ENCODE measurements at regions of chr2 and their contacts with region 1.

Region 1: GRCh38 chr2:230712443-230713330 is at the start of gene CAB39:
- DNase-seq: peak; percentile 90
- H3K4me3 Mint-ChIP-seq: peak within 1 kb of the TSS; percentile 99
- H3K27ac Mint-ChIP-seq: peak within 1 kb of the TSS; percentile 97
- H3K4me1 Mint-ChIP-seq: peaks cover 42% of the 10 kb centered on the region
- H3K27me3 Mint-ChIP-seq: no peaks in the 10 kb centered on the region
- total RNA-seq, gene CAB39: 156 to 161 TPM

Region 2: GRCh38 chr2:230643576-230644291 is 69.0 kb before region 1 on chr2:
- CTCF ChIA-PET with region 1: interaction called, 5 read pairs
- POLR2A ChIA-PET with region 1: interaction called, 33 read pairs
- DNase-seq: peak; percentile 51
- H3K4me3 Mint-ChIP-seq: peak overlapping the region; percentile 34
- H3K27ac Mint-ChIP-seq: peak overlapping the region; percentile 90
- H3K4me1 Mint-ChIP-seq: peaks cover 38% of the 10 kb centered on the region
- H3K27me3 Mint-ChIP-seq: no peaks in the 10 kb centered on the region

Region 3: GRCh38 chr2:230668184-230668938 is 44.3 kb before region 1 on chr2:
- CTCF ChIA-PET with region 1: interaction called, 5 read pairs
- POLR2A ChIA-PET with region 1: interaction called, 15 read pairs
- DNase-seq: peak; percentile 44
- H3K4me3 Mint-ChIP-seq: no peak overlapping the region
- H3K27ac Mint-ChIP-seq: peak overlapping the region; percentile 89
- H3K4me1 Mint-ChIP-seq: peaks cover 84% of the 10 kb centered on the region
- H3K27me3 Mint-ChIP-seq: no peaks in the 10 kb centered on the region

Region 4: GRCh38 chr2:230781130-230781797 is 68.6 kb after region 1 on chr2:
- CTCF ChIA-PET with region 1: interaction called, 8 read pairs
- POLR2A ChIA-PET with region 1: interaction called, 11 read pairs
- DNase-seq: peak; percentile 77
- H3K4me3 Mint-ChIP-seq: peak overlapping the region; percentile 17
- H3K27ac Mint-ChIP-seq: peak overlapping the region; percentile 84
- H3K4me1 Mint-ChIP-seq: peaks cover 86% of the 10 kb centered on the region
- H3K27me3 Mint-ChIP-seq: no peaks in the 10 kb centered on the region

Region 5: GRCh38 chr2:230798769-230799399 is 86.2 kb after region 1 on chr2:
- CTCF ChIA-PET with region 1: interaction called, 59 read pairs
- POLR2A ChIA-PET with region 1: interaction called, 46 read pairs
- DNase-seq: peak; percentile 48
- H3K4me3 Mint-ChIP-seq: no peak overlapping the region
- H3K27ac Mint-ChIP-seq: peak overlapping the region; percentile 66
- H3K4me1 Mint-ChIP-seq: peaks cover 37% of the 10 kb centered on the region
- H3K27me3 Mint-ChIP-seq: no peaks in the 10 kb centered on the region

Region 6: GRCh38 chr2:231104115-231104713 is 391.5 kb after region 1 on chr2:
- CTCF ChIA-PET with region 1: no interaction called
- POLR2A ChIA-PET with region 1: no interaction called
- DNase-seq: peak; percentile 65
- H3K4me3 Mint-ChIP-seq: no peak overlapping the region
- H3K27ac Mint-ChIP-seq: no peak overlapping the region
- H3K4me1 Mint-ChIP-seq: peaks cover 2% of the 10 kb centered on the region
- H3K27me3 Mint-ChIP-seq: no peaks in the 10 kb centered on the region